ENCODE measurements at regions of chr6 and their contacts with region 1.

Region 1: DNA sequence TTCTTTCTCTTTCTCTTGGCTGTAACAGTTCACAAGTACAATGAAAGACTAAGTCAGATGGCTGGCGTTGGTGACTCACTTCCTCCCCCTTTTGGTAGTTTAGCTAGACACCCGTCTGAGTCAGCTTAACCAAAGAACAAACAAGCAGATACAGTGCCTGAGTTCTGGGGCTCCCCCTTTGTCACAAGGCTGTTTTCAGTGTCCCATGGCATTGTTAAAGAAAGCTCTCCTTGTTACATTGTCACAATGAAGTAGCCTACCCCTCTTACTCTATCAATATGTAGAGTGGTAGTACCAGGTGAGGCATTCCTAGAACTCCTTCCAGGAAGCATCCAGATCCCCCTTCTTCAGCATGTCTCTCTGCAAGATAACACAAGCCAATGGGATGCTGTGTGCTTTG is 38.6 kb downstream of the KIAA0408 start:
- DNase-seq: peak; percentile 49 to 62
- H3K4me3 ChIP-seq: no peak overlapping the region
- H3K4me3 Mint-ChIP-seq: no peak overlapping the region
- H3K27ac Mint-ChIP-seq: no peak overlapping the region
- H3K4me1 ChIP-seq: no peaks in the 10 kb centered on the region
- H3K4me1 Mint-ChIP-seq: no peaks in the 10 kb centered on the region
- H3K27me3 ChIP-seq: no peaks in the 10 kb centered on the region
- H3K27me3 Mint-ChIP-seq: no peaks in the 10 kb centered on the region
- CTCF ChIP-seq: peak; percentile 41 to 66

Region 2: DNA sequence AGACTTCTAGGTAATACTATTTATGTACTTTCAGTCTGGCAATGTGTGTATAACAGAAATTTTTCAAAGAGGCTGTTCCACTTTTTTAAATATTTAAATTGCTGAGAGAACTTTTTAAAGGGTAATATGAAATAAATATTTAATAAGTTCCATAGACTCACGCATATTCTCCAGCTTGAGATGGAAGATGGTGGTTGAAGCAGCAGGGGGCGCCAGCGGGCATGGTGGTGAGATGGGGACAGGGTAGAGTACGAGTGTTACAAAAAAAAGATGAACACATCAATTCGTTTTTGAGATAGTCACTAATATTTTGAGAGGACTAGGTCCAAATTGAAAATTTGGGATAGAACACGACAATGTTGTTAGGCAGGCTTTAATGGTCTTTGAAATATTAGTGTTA is 233.7 kb before region 1 on chr6:
- CTCF ChIA-PET with region 1: no interaction called
- POLR2A ChIA-PET with region 1: no interaction called
- intact Hi-C with region 1: loop called (anchors 1 kb)
- DNase-seq: peak; percentile 48 to 69
- H3K4me3 ChIP-seq: no peak overlapping the region
- H3K4me3 Mint-ChIP-seq: no peak overlapping the region
- H3K27ac Mint-ChIP-seq: no peak overlapping the region
- H3K4me1 ChIP-seq: no peaks in the 10 kb centered on the region
- H3K4me1 Mint-ChIP-seq: no peaks in the 10 kb centered on the region
- H3K27me3 ChIP-seq: no peaks in the 10 kb centered on the region
- H3K27me3 Mint-ChIP-seq: peaks cover 3% of the 10 kb centered on the region
- CTCF ChIP-seq: peak; percentile 48 to 54

Region 3: DNA sequence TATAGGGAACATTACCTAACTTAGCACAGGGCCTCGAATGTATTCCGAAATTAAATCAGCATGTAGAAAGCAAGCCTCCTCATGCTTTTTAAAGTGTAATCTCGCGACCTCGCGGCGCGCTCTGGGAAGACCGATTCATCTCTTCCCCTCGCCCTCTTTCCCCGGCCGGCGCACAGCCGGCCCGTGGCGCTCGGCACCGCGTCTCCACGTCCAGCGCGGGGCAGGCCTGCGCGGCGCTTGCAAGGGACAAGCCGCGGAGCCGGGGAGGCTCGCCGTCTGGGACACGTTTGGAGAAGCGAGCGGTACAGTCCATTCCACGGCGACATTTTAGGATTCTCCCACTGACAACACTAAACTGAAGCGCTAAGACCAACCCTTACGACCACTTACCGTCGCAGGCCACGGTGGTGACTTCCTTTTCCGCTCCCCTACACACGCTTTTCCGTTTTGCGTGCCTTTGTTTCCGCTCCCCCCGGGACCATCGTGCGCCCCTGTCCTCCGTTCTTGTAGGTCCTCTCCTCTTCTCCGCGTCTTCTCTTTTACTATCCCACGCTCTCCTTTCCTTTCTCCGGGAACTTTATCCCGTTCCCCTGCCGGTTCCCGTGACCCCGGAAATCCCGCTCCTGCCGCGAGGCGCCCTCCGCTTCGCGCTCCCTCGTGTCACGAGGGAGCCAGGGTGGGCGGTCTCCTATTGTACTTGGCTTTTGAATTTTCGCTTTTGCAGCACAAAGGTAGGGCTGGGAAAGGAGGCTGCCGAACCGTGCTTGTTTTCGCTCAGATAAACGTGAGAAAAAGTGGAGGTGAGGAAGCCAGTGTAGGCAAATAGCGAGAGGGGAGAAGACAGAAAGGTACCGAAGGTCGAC is 77.4 kb before region 1 on chr6 and contains the start of gene ECHDC1:
- CTCF ChIA-PET with region 1: no interaction called
- POLR2A ChIA-PET with region 1: no interaction called
- intact Hi-C with region 1: loop called (anchors 1 kb)
- DNase-seq: peak; percentile 59 to 65
- H3K4me3 ChIP-seq: peak within 1 kb of the TSS; percentile 58
- H3K4me3 Mint-ChIP-seq: no peak within 1 kb of the TSS
- H3K27ac Mint-ChIP-seq: no peak within 1 kb of the TSS
- H3K4me1 ChIP-seq: peaks cover 46% of the 10 kb centered on the region
- H3K4me1 Mint-ChIP-seq: peaks cover 14% of the 10 kb centered on the region
- H3K27me3 ChIP-seq: no peaks in the 10 kb centered on the region
- H3K27me3 Mint-ChIP-seq: no peaks in the 10 kb centered on the region
- CTCF ChIP-seq: no peak
- total RNA-seq, gene ECHDC1: 72.7 and 77.5 TPM in 2 replicates

Region 4: DNA sequence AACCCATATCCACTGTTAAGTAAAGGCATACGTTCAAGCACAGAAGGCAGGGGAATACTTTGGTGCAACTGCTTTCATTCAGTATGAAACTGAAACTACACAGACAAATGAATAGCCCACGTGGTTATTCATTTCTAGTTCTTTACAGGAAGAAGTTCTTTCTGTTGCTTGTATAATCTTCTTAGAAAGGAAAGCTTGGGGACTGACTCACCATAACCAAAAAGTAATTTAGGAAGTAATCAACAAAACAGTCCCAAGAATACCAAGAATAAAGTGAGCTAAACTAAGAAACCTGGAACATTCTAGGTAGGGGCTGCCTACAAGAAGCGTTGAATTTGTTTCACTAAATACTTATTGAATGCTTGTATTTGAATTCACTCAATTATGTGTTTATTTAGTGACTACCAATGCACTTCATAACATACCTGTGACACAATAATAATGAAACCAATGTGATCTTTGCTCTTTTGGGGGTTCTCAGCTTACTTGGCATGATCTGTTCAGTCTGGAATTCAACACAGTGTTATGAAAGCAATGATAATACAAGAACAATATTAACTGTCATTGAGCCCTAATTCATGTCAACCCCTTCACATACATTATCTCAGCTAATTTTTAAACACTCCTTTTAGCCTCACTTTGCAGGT is 63.8 kb after region 1 on chr6:
- CTCF ChIA-PET with region 1: no interaction called
- POLR2A ChIA-PET with region 1: no interaction called
- intact Hi-C with region 1: no loop called
- DNase-seq: no peak
- H3K4me3 ChIP-seq: no peak overlapping the region
- H3K4me3 Mint-ChIP-seq: no peak overlapping the region
- H3K27ac Mint-ChIP-seq: no peak overlapping the region
- H3K4me1 ChIP-seq: peaks cover 9% of the 10 kb centered on the region
- H3K4me1 Mint-ChIP-seq: no peaks in the 10 kb centered on the region
- H3K27me3 ChIP-seq: no peaks in the 10 kb centered on the region
- H3K27me3 Mint-ChIP-seq: peaks cover 5% of the 10 kb centered on the region
- CTCF ChIP-seq: no peak

Region 5: DNA sequence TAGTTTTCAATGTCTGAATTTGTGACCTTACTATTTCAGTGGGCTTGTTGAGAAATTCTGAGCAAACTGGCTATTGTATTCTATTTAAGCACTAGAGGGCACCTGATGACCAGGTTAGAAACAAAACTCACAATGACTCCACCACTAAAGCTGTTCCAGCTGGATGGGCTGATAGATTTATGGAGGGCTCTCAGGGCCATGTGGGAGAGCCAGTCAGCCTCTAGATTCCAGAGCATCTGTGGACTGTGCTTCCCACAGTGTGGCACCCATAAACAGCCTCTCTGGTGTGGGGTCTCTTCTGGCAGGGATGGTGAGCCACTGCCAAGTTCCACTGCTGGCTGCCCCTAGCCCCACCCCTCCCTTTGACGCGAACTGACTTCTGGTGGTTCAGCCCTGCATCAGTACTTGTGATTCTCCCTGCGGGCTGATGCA is 185.6 kb after region 1 on chr6:
- CTCF ChIA-PET with region 1: no interaction called
- POLR2A ChIA-PET with region 1: no interaction called
- intact Hi-C with region 1: no loop called
- DNase-seq: peak in 1 of 2 experiments; percentile 29
- H3K4me3 ChIP-seq: no peak overlapping the region
- H3K4me3 Mint-ChIP-seq: no peak overlapping the region
- H3K27ac Mint-ChIP-seq: no peak overlapping the region
- H3K4me1 ChIP-seq: no peaks in the 10 kb centered on the region
- H3K4me1 Mint-ChIP-seq: no peaks in the 10 kb centered on the region
- H3K27me3 ChIP-seq: no peaks in the 10 kb centered on the region
- H3K27me3 Mint-ChIP-seq: peaks cover 8% of the 10 kb centered on the region
- CTCF ChIP-seq: peak; percentile 27 to 31

Region 6: GRCh38 chr6:127748290-127748689 is 327.7 kb after region 1 on chr6:
- CTCF ChIA-PET with region 1: no interaction called
- POLR2A ChIA-PET with region 1: no interaction called
- intact Hi-C with region 1: no loop called
- DNase-seq: no peak
- H3K4me3 ChIP-seq: no peak overlapping the region
- H3K4me3 Mint-ChIP-seq: no peak overlapping the region
- H3K27ac Mint-ChIP-seq: no peak overlapping the region
- H3K4me1 ChIP-seq: no peaks in the 10 kb centered on the region
- H3K4me1 Mint-ChIP-seq: no peaks in the 10 kb centered on the region
- H3K27me3 ChIP-seq: no peaks in the 10 kb centered on the region
- H3K27me3 Mint-ChIP-seq: peaks cover 3% of the 10 kb centered on the region
- CTCF ChIP-seq: no peak

Measured in Caco-2 (cell line).